PC-3 (cell line): ENCODE measurements at regions of chr7 and their contacts with region 1.

Region 1: DNA sequence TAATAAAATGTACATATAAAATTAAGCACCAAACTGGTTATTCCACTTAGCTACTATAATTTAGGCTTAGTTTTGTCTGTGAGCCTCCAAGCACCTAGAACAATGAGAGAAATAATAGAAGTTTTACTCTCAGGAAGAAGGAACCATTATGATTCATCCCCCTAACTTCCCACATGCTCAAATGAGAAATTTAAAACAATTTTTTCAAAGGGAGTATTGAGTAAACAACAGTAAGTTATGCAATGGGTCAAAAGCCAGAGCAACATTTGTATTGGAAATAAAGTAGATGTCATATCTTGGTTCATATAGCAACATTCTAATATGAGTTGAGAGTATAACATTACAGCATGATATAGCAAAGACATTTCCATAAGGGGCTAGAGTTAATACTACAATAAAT is 32.1 kb downstream of the CPED1 start:
- DNase-seq: peak; percentile 70
- ATAC-seq: peak; percentile 72
- H3K4me3 ChIP-seq: no peak overlapping the region
- H3K27ac ChIP-seq: peak overlapping the region; percentile 21
- H3K4me1 ChIP-seq: peaks cover 38% of the 10 kb centered on the region
- H3K27me3 ChIP-seq: no peaks in the 10 kb centered on the region
- CTCF ChIP-seq: no peak

Region 2: GRCh38 chr7:120792091-120792860 is 228.4 kb before region 1 on chr7:
- CTCF ChIA-PET with region 1: no interaction called
- POLR2A ChIA-PET with region 1: no interaction called
- intact Hi-C with region 1: no loop called
- DNase-seq: peak; percentile 72
- ATAC-seq: peak; percentile 93
- H3K4me3 ChIP-seq: no peak overlapping the region
- H3K27ac ChIP-seq: no peak overlapping the region
- H3K4me1 ChIP-seq: no peaks in the 10 kb centered on the region
- H3K27me3 ChIP-seq: no peaks in the 10 kb centered on the region
- CTCF ChIP-seq: peak; percentile 92

Region 3: DNA sequence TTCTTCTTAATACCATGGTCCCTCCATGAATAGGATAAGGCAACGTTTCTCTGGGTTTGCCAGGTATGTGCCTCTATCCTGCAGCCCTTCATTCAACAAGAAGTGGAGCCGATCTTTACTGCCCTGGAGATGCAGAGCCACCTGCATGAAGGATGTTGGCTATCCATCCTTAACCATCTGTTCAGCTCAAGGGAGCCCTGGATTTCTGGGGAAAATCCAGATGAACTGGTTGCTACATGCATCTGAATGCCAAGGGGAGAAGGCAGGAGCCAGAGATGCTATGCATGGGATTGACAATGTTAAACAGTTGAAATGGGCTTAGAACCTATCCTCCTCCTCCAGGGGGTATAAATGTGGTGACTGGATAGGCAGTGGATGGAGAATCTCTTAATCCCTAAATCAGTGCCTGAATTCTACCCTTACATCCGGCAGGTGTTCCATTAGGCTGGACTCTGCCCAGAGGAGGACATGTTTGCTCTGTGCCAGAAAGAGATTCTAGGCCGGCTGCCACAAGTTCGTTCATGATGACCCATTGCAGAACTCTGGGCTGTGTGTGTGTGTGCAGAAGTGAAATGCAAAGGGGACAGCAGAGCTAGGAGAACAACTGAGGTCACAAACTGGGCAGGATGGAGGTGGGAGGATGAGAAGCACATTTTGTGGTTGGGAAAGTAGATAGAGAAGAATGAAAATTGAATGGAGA is 16.5 kb before region 1 on chr7:
- CTCF ChIA-PET with region 1: no interaction called
- POLR2A ChIA-PET with region 1: interaction called, 3 read pairs
- intact Hi-C with region 1: loop called (anchors 1 kb)
- DNase-seq: no peak
- ATAC-seq: no peak
- H3K4me3 ChIP-seq: no peak overlapping the region
- H3K27ac ChIP-seq: no peak overlapping the region
- H3K4me1 ChIP-seq: peaks cover 29% of the 10 kb centered on the region
- H3K27me3 ChIP-seq: no peaks in the 10 kb centered on the region
- CTCF ChIP-seq: no peak

Region 4: DNA sequence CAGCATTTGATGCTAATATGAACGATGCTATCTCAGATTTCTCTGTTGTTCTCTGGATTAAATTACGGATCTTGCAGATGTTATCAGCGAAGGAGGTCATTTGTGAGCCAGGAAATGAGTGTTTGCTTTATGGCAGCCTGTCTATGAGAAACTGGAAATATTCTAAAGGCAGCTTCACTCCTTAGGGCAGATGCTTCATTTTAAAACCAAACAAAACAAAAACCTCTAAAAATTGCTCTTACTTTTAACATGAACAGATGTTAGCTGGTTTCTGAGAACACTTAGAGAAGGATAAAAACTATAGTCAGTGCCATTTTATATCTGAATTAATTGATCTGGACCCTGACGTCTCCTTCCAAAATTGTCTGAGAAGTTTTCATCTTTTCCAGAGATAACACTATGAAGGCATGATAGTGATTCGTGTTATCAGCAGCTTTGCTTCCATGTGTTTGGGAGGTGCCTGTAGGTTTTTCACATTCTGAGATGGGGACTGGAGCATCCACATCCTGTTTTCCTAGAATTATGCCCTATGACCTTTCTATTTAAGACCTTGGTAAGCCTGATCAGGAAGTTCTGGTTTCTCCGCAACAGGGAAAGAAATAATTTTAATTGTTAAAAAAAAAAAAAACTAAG is 21.0 kb after region 1 on chr7:
- CTCF ChIA-PET with region 1: no interaction called
- POLR2A ChIA-PET with region 1: no interaction called
- intact Hi-C with region 1: loop called (anchors 2 kb)
- DNase-seq: peak; percentile 49
- ATAC-seq: peak; percentile 81
- H3K4me3 ChIP-seq: no peak overlapping the region
- H3K27ac ChIP-seq: peak overlapping the region; percentile 30; the same call in 1 of the 2 replicates
- H3K4me1 ChIP-seq: peaks cover 9% of the 10 kb centered on the region
- H3K27me3 ChIP-seq: no peaks in the 10 kb centered on the region
- CTCF ChIP-seq: no peak

Region 5: GRCh38 chr7:121049028-121049791 is 28.6 kb after region 1 on chr7:
- CTCF ChIA-PET with region 1: no interaction called
- POLR2A ChIA-PET with region 1: no interaction called
- intact Hi-C with region 1: loop called (anchors 2 kb)
- DNase-seq: peak; percentile 16
- ATAC-seq: peak; percentile 80
- H3K4me3 ChIP-seq: no peak overlapping the region
- H3K27ac ChIP-seq: no peak overlapping the region
- H3K4me1 ChIP-seq: peaks cover 3% of the 10 kb centered on the region; the same call in 1 of the 2 replicates
- H3K27me3 ChIP-seq: no peaks in the 10 kb centered on the region
- CTCF ChIP-seq: no peak